HepG2 (cell line): ENCODE measurements at regions of chr3 and their contacts with region 1.

Region 1: GRCh38 chr3:194134757-194135528 is 1.0 kb upstream of the HES1 start:
- DNase-seq: peak; percentile 93
- ATAC-seq: peak; percentile 55
- H3K4me3 ChIP-seq: peak overlapping the region; percentile 57 to 70 (median 67)
- H3K27ac ChIP-seq: peak overlapping the region; percentile 94
- H3K4me1 ChIP-seq: peaks cover 64% of the 10 kb centered on the region
- H3K27me3 ChIP-seq: no peaks in the 10 kb centered on the region; a peak in 1 of 5 replicates
- CTCF ChIP-seq: no peak
- EP300 ChIP-seq: peak; percentile 55 to 75; a peak in 3 of 4 replicates
- POLR2A ChIP-seq: no peak
- RAD21 ChIP-seq: no peak

Region 2: GRCh38 chr3:193592944-193593667 is 541.8 kb before region 1 on chr3 and contains the start of gene OPA1:
- CTCF ChIA-PET with region 1: no interaction called
- POLR2A ChIA-PET with region 1: no interaction called
- in situ Hi-C with region 1: no loop called
- intact Hi-C with region 1: loop called (anchors 10 kb)
- DNase-seq: peak; percentile 98
- ATAC-seq: peak; percentile 99
- H3K4me3 ChIP-seq: peak within 1 kb of the TSS; percentile 62 to 94 (median 92)
- H3K27ac ChIP-seq: peak within 1 kb of the TSS; percentile 86
- H3K4me1 ChIP-seq: peaks cover 39% of the 10 kb centered on the region
- H3K27me3 ChIP-seq: peaks cover 0 to 5% of the 10 kb centered on the region in 2 experiments; a peak in 1 of 5 replicates
- CTCF ChIP-seq: peak; percentile 56
- EP300 ChIP-seq: peak in 1 of 2 experiments; percentile 65; a peak in 2 of 4 replicates
- POLR2A ChIP-seq: peak; percentile 76 to 92
- RAD21 ChIP-seq: peak; percentile 54
- total RNA-seq, gene OPA1: 78.5 and 126 TPM in 2 replicates

Region 3: DNA sequence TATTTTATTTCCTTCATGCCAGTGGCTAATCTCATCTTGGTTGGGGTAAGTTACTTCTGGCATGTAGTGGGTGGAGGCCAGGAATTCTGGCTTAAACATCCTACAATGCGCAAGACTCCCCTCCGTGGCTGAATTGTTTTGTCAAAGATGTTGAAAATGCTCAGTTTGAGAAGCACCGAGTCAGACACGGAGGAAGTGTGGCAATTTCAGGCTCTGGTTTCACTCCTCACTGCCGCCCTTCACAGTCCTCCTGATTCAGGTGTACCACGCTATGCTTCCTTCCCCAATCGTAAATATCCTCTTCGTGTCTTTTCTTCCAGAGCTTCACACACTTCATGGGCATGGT is 391.3 kb before region 1 on chr3:
- CTCF ChIA-PET with region 1: no interaction called
- POLR2A ChIA-PET with region 1: interaction called, 12 read pairs
- in situ Hi-C with region 1: no loop called
- intact Hi-C with region 1: loop called (anchors 1 kb)
- DNase-seq: no peak
- ATAC-seq: peak; percentile 56; the same call in 2 of the 3 replicates
- H3K4me3 ChIP-seq: peak overlapping the region; percentile 41 to 74 (median 46)
- H3K27ac ChIP-seq: peak overlapping the region; percentile 97
- H3K4me1 ChIP-seq: peaks cover 40% of the 10 kb centered on the region
- H3K27me3 ChIP-seq: no peaks in the 10 kb centered on the region
- CTCF ChIP-seq: peak; percentile 24; the same call in 1 of the 2 replicates
- EP300 ChIP-seq: no peak
- POLR2A ChIP-seq: 0 out of 4 replicates have a peak, but pooled peaks of 1 of the 2 experiments have one; percentile 46
- RAD21 ChIP-seq: no peak

Region 4: DNA sequence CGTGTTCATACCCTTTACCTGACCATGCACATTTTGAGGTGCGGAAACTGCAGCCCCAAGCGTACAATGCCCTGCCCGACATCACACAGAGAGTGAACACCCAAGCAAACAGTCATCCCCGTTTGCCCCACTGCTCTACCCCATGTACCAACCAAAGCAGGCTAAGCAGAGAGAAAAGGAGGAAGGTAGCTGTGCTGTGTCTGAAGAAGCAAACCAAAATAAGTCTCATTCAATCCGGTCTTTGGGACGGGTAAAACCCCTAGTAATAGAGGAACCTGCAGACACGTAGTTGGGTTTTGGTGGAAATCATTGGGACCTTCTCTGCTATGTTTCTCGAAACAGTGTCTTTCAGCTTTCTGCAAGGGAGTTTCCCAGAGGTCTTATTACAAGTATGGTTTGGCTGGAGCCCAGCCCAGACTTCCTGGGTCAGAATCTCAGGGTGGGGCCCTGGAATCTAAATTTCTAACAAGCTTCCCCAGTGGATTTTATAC is 163.6 kb before region 1 on chr3:
- CTCF ChIA-PET with region 1: interaction called, 4 read pairs
- POLR2A ChIA-PET with region 1: no interaction called
- in situ Hi-C with region 1: no loop called
- intact Hi-C with region 1: loop called (anchors 2 kb)
- DNase-seq: no peak
- ATAC-seq: no peak; the same call in 2 of the 3 replicates
- H3K4me3 ChIP-seq: no peak overlapping the region
- H3K27ac ChIP-seq: no peak overlapping the region
- H3K4me1 ChIP-seq: peaks cover 30% of the 10 kb centered on the region
- H3K27me3 ChIP-seq: peaks cover 4 to 36% of the 10 kb centered on the region in 2 experiments
- CTCF ChIP-seq: no peak
- EP300 ChIP-seq: no peak
- POLR2A ChIP-seq: no peak
- RAD21 ChIP-seq: no peak

Region 5: DNA sequence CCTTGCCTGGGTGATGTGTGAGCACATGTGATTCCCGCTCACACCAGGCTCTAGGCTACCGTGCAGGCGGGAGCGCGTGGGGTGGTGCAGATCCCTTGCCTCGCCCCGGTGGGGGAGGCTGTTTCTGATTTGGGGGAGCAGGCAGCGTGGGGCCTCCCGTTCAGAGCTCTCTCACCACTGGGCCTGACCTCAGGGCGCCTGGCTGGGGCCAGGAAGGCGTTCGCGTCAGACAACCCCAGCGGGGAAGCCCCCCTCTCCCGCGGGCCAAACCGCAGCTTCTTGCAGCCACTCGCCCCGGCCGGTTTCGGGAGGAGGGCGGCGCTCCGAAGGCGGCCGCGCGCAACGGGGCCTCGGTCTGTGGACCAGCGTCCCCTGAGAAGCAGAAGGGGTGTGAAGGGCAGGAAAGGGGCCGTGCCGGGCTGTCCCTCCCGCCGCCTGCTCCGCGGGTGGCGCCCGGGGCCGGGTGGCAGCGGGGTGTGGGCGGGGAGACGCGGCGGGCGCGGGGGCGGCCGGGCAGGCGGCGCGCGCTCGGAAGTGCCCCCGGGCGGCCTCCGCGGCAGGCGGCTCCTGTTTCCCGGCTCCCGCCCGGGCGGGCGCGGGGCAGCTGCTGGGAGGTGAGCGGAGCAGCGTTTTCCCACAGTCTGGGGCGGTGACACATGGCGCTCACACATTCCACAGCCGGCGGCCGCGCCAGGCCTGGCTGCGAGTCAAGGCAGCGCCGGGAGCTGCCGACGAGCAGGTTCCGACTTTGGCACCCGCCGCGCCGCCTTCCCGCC is 64.1 kb before region 1 on chr3:
- CTCF ChIA-PET with region 1: no interaction called
- POLR2A ChIA-PET with region 1: interaction called, 128 read pairs
- in situ Hi-C with region 1: loop called (anchors 10 kb)
- intact Hi-C with region 1: loop called (anchors 2 kb)
- DNase-seq: peak; percentile 47
- ATAC-seq: peak; percentile 67
- H3K4me3 ChIP-seq: peak overlapping the region; percentile 41 to 68 (median 47); a peak in 5 of 6 replicates
- H3K27ac ChIP-seq: peak overlapping the region; percentile 68
- H3K4me1 ChIP-seq: peaks cover 53% of the 10 kb centered on the region
- H3K27me3 ChIP-seq: no peaks in the 10 kb centered on the region; a peak in 1 of 5 replicates
- CTCF ChIP-seq: no peak
- EP300 ChIP-seq: no peak; a peak in 2 of 4 replicates
- POLR2A ChIP-seq: peak in 1 of 2 experiments; percentile 33; a peak in 1 of 4 replicates
- RAD21 ChIP-seq: no peak; the same call in 1 of the 2 replicates

Region 6: DNA sequence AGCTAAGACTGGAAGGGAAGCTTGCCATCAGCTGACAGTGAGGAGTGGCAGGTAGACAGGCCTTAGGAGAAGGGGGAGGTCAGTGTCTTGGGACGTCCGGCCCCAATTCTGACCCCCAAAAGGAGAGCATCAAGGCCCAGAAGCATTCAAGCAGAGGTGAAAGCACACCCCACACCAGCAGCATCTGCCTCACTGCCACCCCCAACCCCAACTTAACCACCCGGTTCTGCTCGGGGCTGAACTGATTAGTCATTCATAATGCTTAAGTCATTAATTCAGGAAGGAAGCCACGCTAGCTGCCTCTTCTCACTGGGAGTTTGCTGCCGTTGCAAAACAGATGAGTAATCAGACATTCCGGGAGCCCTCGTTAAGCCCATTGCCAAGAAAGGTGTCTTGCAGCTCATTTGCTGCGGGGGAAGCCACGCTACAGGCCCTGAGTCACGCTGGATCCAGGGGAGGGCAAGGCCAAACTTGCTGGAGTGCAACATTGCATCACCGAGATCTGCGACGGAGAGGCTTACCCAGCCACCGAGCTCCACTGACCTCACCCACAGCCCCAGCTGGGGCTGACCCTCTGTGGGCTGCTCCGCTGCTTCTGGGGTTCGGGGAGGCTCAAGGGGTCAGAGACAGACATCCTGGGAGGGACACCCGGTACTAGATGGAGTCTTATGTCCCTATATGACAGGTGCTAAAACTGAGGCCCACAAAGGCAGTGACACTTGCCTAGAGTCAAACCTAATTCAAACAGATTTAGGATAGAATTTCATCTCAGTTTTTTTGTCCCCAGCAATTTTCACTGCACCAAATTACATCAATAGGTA is 45.4 kb before region 1 on chr3:
- CTCF ChIA-PET with region 1: no interaction called
- POLR2A ChIA-PET with region 1: interaction called, 14 read pairs
- in situ Hi-C with region 1: no loop called
- intact Hi-C with region 1: no loop called
- DNase-seq: peak; percentile 71
- ATAC-seq: peak; percentile 89
- H3K4me3 ChIP-seq: peak overlapping the region in 1 of 3 experiments; percentile 36; a peak in 1 of 6 replicates
- H3K27ac ChIP-seq: no peak overlapping the region
- H3K4me1 ChIP-seq: peaks cover 52% of the 10 kb centered on the region
- H3K27me3 ChIP-seq: no peaks in the 10 kb centered on the region; a peak in 1 of 5 replicates
- CTCF ChIP-seq: no peak
- EP300 ChIP-seq: peak in 1 of 2 experiments; percentile 4; a peak in 1 of 4 replicates
- POLR2A ChIP-seq: no peak
- RAD21 ChIP-seq: no peak

Region 7: DNA sequence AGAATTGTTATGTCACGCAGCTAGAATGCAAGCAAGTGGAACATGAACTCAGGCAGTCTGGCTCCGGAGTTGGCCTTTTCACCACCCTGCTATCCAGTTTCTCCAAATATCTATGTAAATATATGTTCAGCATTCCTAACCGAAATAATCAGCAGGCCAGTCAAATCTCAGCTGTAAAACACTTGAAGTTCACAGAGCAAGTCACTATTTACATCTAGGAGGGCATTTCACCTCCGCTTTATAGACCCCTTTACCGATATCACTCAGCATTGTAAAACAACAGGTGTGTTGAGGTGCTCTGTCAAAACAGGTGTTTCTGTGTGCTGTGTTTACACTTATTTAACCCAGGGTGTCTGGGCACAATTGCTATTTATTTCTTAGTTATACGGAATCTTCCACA is 11.2 kb before region 1 on chr3:
- CTCF ChIA-PET with region 1: no interaction called
- POLR2A ChIA-PET with region 1: interaction called, 13 read pairs
- in situ Hi-C with region 1: no loop called
- intact Hi-C with region 1: no loop called
- DNase-seq: no peak
- ATAC-seq: no peak
- H3K4me3 ChIP-seq: no peak overlapping the region
- H3K27ac ChIP-seq: no peak overlapping the region
- H3K4me1 ChIP-seq: peaks cover 35% of the 10 kb centered on the region
- H3K27me3 ChIP-seq: no peaks in the 10 kb centered on the region; a peak in 1 of 5 replicates
- CTCF ChIP-seq: no peak
- EP300 ChIP-seq: no peak
- POLR2A ChIP-seq: no peak
- RAD21 ChIP-seq: no peak